ENCODE measurements at regions of chr9 and their contacts with region 1.

Region 1: GRCh38 chr9:98034593-98035546 is 21.7 kb upstream of the NANS start:
- DNase-seq: peak; percentile 76 to 93 (median 88)
- H3K4me3 ChIP-seq: no peak overlapping the region
- H3K4me3 Mint-ChIP-seq: peak overlapping the region in 5 of 7 donors; percentile 6 to 56 (median 27)
- H3K27ac ChIP-seq: no peak overlapping the region
- H3K27ac Mint-ChIP-seq: peak overlapping the region in 6 of 8 donors; percentile 17 to 90 (median 30)
- H3K4me1 ChIP-seq: peaks cover 7% of the 10 kb centered on the region
- H3K4me1 Mint-ChIP-seq: peaks cover 6 to 8% (median 8%) of the 10 kb centered on the region in 3 donors
- H3K27me3 ChIP-seq: no peaks in the 10 kb centered on the region
- H3K27me3 Mint-ChIP-seq: peaks cover 0 to 14% of the 10 kb centered on the region in 2 donors

Region 2: GRCh38 chr9:98045234-98046179 is 10.6 kb after region 1 on chr9:
- CTCF ChIA-PET with region 1: interaction called, 35 read pairs
- POLR2A ChIA-PET with region 1: no interaction called
- DNase-seq: peak in 4 of 5 donors; percentile 35 to 75 (median 61)
- H3K4me3 ChIP-seq: peak overlapping the region; percentile 47
- H3K4me3 Mint-ChIP-seq: peak overlapping the region; percentile 66 to 86 (median 81)
- H3K27ac ChIP-seq: peak overlapping the region; percentile 55
- H3K27ac Mint-ChIP-seq: peak overlapping the region; percentile 49 to 97 (median 90)
- H3K4me1 ChIP-seq: peaks cover 16% of the 10 kb centered on the region
- H3K4me1 Mint-ChIP-seq: peaks cover 22 to 40% (median 35%) of the 10 kb centered on the region in 3 donors
- H3K27me3 ChIP-seq: no peaks in the 10 kb centered on the region
- H3K27me3 Mint-ChIP-seq: no peaks in the 10 kb centered on the region

Region 3: GRCh38 chr9:98056269-98057137 is 21.6 kb after region 1 on chr9 and contains the start of gene NANS:
- CTCF ChIA-PET with region 1: interaction called, 11 read pairs
- POLR2A ChIA-PET with region 1: no interaction called
- DNase-seq: peak; percentile 87 to 94 (median 88)
- H3K4me3 ChIP-seq: peak within 1 kb of the TSS; percentile 76
- H3K4me3 Mint-ChIP-seq: peak within 1 kb of the TSS; percentile 94 to 99 (median 96)
- H3K27ac ChIP-seq: peak within 1 kb of the TSS; percentile 72
- H3K27ac Mint-ChIP-seq: peak within 1 kb of the TSS; percentile 91 to 99 (median 96)
- H3K4me1 ChIP-seq: peaks cover 16% of the 10 kb centered on the region
- H3K4me1 Mint-ChIP-seq: peaks cover 18 to 32% (median 30%) of the 10 kb centered on the region in 3 donors
- H3K27me3 ChIP-seq: no peaks in the 10 kb centered on the region
- H3K27me3 Mint-ChIP-seq: no peaks in the 10 kb centered on the region
- total RNA-seq, gene NANS: 33.2 to 34.8 TPM